ENCODE measurements at regions of chr2 and their contacts with region 1.

Region 1: DNA sequence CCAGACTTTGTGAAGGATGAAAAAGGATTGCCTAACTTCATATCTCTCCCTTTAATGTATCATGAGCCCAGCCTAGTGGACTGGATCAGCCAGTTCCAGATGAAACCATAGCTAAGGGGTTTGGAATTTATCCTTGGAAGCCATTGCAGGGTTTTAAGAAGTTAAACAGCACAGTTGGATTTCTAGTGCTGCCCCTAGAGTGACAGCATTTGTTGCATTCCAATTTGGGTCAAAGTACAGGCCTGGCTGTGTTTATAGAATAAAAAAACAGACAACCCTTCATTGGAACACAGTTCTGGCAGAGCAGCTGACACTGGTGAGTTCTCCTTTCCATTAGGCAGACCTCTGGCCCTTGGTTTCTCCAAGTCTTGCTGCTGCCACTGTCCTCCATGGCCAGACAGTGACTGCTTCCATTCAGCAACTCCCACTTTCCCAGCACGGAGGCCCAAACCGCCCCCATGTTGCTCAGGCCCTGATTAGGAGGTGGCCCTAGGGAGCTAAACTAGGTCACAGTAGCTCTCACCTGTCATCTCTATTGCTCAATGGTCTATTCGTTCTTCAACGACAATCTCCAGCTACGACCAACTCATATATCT is 8.0 kb downstream of the GPR39 start:
- DNase-seq: peak; percentile 77 to 84
- H3K4me3 ChIP-seq: no peak overlapping the region
- H3K4me3 Mint-ChIP-seq: peak overlapping the region; percentile 48
- H3K27ac Mint-ChIP-seq: peak overlapping the region; percentile 51
- H3K4me1 ChIP-seq: peaks cover 60% of the 10 kb centered on the region
- H3K4me1 Mint-ChIP-seq: peaks cover 43% of the 10 kb centered on the region
- H3K27me3 ChIP-seq: no peaks in the 10 kb centered on the region
- H3K27me3 Mint-ChIP-seq: no peaks in the 10 kb centered on the region
- CTCF ChIP-seq: peak in 1 of 2 experiments; percentile 23

Region 2: GRCh38 chr2:132267105-132267497 is 157.5 kb before region 1 on chr2:
- CTCF ChIA-PET with region 1: interaction called, 3 read pairs
- POLR2A ChIA-PET with region 1: no interaction called
- intact Hi-C with region 1: loop called (anchors 1 kb)
- DNase-seq: no peak
- H3K4me3 ChIP-seq: no peak overlapping the region
- H3K4me3 Mint-ChIP-seq: no peak overlapping the region
- H3K27ac Mint-ChIP-seq: no peak overlapping the region
- H3K4me1 ChIP-seq: peaks cover 10% of the 10 kb centered on the region
- H3K4me1 Mint-ChIP-seq: no peaks in the 10 kb centered on the region
- H3K27me3 ChIP-seq: no peaks in the 10 kb centered on the region
- H3K27me3 Mint-ChIP-seq: no peaks in the 10 kb centered on the region
- CTCF ChIP-seq: no peak

Region 3: GRCh38 chr2:132400169-132400900 is 24.3 kb before region 1 on chr2:
- CTCF ChIA-PET with region 1: interaction called, 9 read pairs
- POLR2A ChIA-PET with region 1: no interaction called
- intact Hi-C with region 1: loop called (anchors 1 kb)
- DNase-seq: peak; percentile 76 to 79
- H3K4me3 ChIP-seq: no peak overlapping the region
- H3K4me3 Mint-ChIP-seq: no peak overlapping the region
- H3K27ac Mint-ChIP-seq: no peak overlapping the region
- H3K4me1 ChIP-seq: no peaks in the 10 kb centered on the region
- H3K4me1 Mint-ChIP-seq: peaks cover 22% of the 10 kb centered on the region
- H3K27me3 ChIP-seq: no peaks in the 10 kb centered on the region
- H3K27me3 Mint-ChIP-seq: no peaks in the 10 kb centered on the region
- CTCF ChIP-seq: peak in 1 of 2 experiments; percentile 37

Region 4: GRCh38 chr2:132438691-132439090 is 14.1 kb after region 1 on chr2:
- CTCF ChIA-PET with region 1: interaction called, 7 read pairs
- POLR2A ChIA-PET with region 1: interaction called, 5 read pairs
- intact Hi-C with region 1: loop called (anchors 1 kb)
- DNase-seq: no peak
- H3K4me3 ChIP-seq: no peak overlapping the region
- H3K4me3 Mint-ChIP-seq: no peak overlapping the region
- H3K27ac Mint-ChIP-seq: peak overlapping the region; percentile 60
- H3K4me1 ChIP-seq: peaks cover 50% of the 10 kb centered on the region
- H3K4me1 Mint-ChIP-seq: peaks cover 55% of the 10 kb centered on the region
- H3K27me3 ChIP-seq: no peaks in the 10 kb centered on the region
- H3K27me3 Mint-ChIP-seq: no peaks in the 10 kb centered on the region
- CTCF ChIP-seq: no peak

Region 5: DNA sequence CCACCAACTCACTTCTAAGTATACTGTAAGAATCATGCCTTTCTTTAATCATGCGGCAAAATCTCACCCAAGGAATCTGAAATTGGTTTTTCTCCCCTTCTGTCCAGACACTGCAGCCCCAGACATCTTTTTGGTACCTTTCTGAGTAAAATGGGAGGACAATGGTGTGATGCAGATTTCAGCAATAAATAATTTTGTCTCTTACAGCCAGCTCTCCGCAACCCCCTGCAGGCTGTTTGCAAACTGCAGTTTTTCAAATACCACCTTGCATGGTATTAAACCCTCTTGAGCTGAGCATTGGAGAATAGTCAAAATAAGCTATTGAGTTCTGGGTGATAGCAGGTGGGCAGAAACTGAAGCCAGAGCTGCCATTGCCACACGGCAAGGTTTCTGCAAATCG is 24.1 kb after region 1 on chr2:
- CTCF ChIA-PET with region 1: interaction called, 8 read pairs
- POLR2A ChIA-PET with region 1: no interaction called
- intact Hi-C with region 1: loop called (anchors 1 kb)
- DNase-seq: peak in 1 of 2 experiments; percentile 50
- H3K4me3 ChIP-seq: no peak overlapping the region
- H3K4me3 Mint-ChIP-seq: peak overlapping the region; percentile 20
- H3K27ac Mint-ChIP-seq: no peak overlapping the region
- H3K4me1 ChIP-seq: peaks cover 38% of the 10 kb centered on the region
- H3K4me1 Mint-ChIP-seq: peaks cover 31% of the 10 kb centered on the region
- H3K27me3 ChIP-seq: no peaks in the 10 kb centered on the region
- H3K27me3 Mint-ChIP-seq: no peaks in the 10 kb centered on the region
- CTCF ChIP-seq: peak; percentile 50 to 67

Region 6: DNA sequence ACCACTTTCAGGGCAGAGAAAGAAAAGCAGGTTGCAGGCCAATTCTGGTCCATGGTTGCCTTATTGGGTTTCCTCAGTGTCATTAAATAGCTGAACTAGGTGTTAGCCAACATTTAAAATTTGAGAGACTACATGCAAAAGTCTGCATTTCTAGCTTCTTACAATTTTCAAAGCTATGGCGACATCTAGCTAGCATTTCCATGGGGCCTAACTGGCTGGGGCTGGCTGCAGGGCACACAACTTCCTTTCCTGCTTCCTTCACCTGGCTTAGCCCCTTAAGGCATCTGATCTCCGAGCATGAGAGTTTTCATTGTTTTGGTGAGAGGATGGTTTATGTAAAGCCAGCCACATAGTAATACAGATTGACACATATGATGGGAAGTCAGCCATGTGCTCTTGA is 428.5 kb after region 1 on chr2:
- CTCF ChIA-PET with region 1: no interaction called
- POLR2A ChIA-PET with region 1: no interaction called
- intact Hi-C with region 1: loop called (anchors 10 kb)
- DNase-seq: no peak
- H3K4me3 ChIP-seq: no peak overlapping the region
- H3K4me3 Mint-ChIP-seq: no peak overlapping the region
- H3K27ac Mint-ChIP-seq: no peak overlapping the region
- H3K4me1 ChIP-seq: no peaks in the 10 kb centered on the region
- H3K4me1 Mint-ChIP-seq: no peaks in the 10 kb centered on the region
- H3K27me3 ChIP-seq: no peaks in the 10 kb centered on the region
- H3K27me3 Mint-ChIP-seq: no peaks in the 10 kb centered on the region
- CTCF ChIP-seq: peak in 1 of 2 experiments; percentile 13

Measured in Caco-2 (cell line).